CD14-positive monocyte (primary cell): ENCODE measurements at regions of chr2 and their contacts with region 1.

Region 1: DNA sequence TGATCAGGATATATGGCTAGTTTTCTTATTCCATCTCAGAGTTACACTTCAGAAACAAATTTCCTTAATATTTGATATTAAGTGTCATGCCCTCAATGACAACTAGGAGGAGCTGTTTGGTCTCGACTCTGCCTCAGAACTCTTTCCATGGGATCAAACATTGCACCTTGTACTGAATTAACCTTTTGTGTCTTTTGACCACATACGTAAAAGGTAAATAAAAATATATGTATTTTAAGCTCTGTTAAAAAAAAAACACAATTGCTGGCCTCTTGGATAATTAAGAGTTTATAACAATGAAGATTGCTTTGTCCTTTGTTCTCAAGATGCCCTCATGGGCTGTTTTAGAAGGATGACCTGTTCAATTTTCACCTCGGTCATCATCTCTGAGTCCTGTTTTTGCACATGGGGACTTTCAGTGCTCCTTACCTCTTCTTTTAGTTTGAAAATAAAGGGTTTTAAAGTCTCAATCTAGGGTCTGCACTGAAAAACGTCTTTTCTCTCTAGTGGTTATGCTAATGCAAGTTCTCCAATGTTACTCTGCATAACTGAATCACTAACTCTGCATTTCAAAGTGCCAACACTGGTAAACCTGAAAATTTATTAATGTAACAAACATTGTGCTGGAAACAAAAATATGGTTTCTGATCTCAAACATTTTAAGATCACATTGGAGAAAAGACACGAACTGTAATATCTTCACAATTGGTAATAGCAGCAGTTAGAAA is 18.8 kb upstream of the FN1 start:
- DNase-seq: peak; percentile 11 to 43 (median 32)
- H3K4me3 ChIP-seq: no peak overlapping the region
- H3K4me3 Mint-ChIP-seq: no peak overlapping the region
- H3K27ac ChIP-seq: no peak overlapping the region
- H3K27ac Mint-ChIP-seq: no peak overlapping the region
- H3K4me1 ChIP-seq: no peaks in the 10 kb centered on the region
- H3K4me1 Mint-ChIP-seq: no peaks in the 10 kb centered on the region
- H3K27me3 ChIP-seq: peaks cover 0 to 8% of the 10 kb centered on the region in 2 donors
- H3K27me3 Mint-ChIP-seq: peaks cover 0 to 22% (median 13%) of the 10 kb centered on the region in 3 donors
- CTCF ChIP-seq: peak; percentile 91

Region 2: DNA sequence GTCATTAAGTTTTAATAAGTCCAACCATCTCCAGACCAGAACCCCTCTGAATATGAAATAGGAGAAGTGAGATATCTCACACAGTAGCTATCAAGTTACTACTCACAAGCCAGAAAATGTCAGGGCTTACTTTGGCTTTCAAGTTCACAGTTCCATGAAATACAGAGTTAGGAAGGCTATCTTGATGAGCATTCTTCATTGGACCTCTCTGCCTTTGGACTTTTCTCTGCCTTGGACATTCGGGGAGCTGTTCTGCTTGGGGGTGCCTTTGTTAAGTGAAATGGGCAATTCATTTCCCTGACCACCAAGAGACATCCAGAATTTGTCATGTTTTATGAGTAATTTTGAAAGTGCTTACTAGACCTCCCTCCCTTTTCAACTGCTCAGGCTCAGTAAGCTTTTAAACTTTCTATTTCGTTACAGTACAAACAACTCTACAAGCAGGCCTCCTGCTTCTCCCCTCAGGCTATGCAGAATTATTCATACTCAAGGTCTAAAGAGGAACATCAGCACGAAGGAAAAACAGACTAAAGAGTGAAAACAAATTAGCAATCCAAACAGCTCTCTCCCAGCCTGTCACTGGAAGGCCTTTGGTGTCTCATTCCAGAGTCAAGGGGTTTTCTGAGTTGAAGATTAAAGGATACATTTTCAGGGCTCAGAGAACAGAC is 463.4 kb after region 1 on chr2:
- intact Hi-C with region 1: loop called in 1 of 2 experiments (anchors 5 kb)
- DNase-seq: no peak
- H3K4me3 ChIP-seq: no peak overlapping the region
- H3K4me3 Mint-ChIP-seq: no peak overlapping the region
- H3K27ac ChIP-seq: no peak overlapping the region
- H3K27ac Mint-ChIP-seq: peak overlapping the region in 5 of 7 donors; percentile 38 to 68 (median 59)
- H3K4me1 ChIP-seq: peaks cover 16 to 26% of the 10 kb centered on the region in 2 donors
- H3K4me1 Mint-ChIP-seq: peaks cover 19% of the 10 kb centered on the region
- H3K27me3 ChIP-seq: no peaks in the 10 kb centered on the region
- H3K27me3 Mint-ChIP-seq: peaks cover 3 to 8% (median 4%) of the 10 kb centered on the region in 3 donors
- CTCF ChIP-seq: no peak

Region 3: DNA sequence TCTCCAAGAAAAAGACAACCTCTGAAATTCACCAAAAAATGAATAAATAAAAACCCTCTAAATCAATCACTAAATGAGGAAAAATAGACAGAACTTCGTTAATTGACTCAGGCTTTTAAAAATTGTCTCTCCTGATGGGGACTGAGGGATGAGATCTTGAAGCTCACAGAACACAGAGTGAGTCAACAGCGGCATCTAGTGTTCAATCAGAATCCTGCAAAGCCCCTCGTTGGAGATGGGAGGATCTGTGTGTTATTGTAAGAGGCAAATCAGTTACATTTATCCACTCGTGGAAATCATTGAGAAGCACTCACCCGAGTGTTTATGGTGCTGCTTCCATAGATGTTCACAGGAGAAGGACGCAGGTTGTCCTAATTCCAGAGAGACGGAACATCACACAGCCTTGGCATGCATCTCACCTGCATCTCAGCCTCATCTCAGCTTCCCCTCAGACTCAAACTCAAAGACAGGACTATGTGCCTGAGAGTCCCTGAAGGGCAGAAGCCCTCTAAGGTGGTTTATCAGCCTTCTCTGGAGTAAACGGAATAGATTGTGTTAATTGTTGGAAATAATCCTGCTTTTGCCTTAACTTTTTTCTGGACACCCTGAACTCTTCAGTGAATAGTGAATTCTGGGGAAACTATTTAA is 476.7 kb after region 1 on chr2:
- intact Hi-C with region 1: loop called in 1 of 2 experiments (anchors 5 kb)
- DNase-seq: peak; percentile 38 to 65 (median 50)
- H3K4me3 ChIP-seq: no peak overlapping the region
- H3K4me3 Mint-ChIP-seq: no peak overlapping the region
- H3K27ac ChIP-seq: no peak overlapping the region
- H3K27ac Mint-ChIP-seq: no peak overlapping the region
- H3K4me1 ChIP-seq: peaks cover 0 to 8% of the 10 kb centered on the region in 2 donors
- H3K4me1 Mint-ChIP-seq: peaks cover 11% of the 10 kb centered on the region
- H3K27me3 ChIP-seq: no peaks in the 10 kb centered on the region
- H3K27me3 Mint-ChIP-seq: peaks cover 0 to 11% (median 11%) of the 10 kb centered on the region in 3 donors
- CTCF ChIP-seq: peak; percentile 94